GM18951 (cell line): ENCODE measurements at regions of chr4 and their contacts with region 1.

Region 1: GRCh38 chr4:16026160-16026761 is 57.6 kb downstream of the PROM1 start:
- POLR2A ChIP-seq: no peak

Region 2: GRCh38 chr4:15963001-15963451 is 63.2 kb before region 1 on chr4 and contains the start of gene FGFBP2:
- in situ Hi-C with region 1: no loop called
- POLR2A ChIP-seq: no peak

Region 3: DNA sequence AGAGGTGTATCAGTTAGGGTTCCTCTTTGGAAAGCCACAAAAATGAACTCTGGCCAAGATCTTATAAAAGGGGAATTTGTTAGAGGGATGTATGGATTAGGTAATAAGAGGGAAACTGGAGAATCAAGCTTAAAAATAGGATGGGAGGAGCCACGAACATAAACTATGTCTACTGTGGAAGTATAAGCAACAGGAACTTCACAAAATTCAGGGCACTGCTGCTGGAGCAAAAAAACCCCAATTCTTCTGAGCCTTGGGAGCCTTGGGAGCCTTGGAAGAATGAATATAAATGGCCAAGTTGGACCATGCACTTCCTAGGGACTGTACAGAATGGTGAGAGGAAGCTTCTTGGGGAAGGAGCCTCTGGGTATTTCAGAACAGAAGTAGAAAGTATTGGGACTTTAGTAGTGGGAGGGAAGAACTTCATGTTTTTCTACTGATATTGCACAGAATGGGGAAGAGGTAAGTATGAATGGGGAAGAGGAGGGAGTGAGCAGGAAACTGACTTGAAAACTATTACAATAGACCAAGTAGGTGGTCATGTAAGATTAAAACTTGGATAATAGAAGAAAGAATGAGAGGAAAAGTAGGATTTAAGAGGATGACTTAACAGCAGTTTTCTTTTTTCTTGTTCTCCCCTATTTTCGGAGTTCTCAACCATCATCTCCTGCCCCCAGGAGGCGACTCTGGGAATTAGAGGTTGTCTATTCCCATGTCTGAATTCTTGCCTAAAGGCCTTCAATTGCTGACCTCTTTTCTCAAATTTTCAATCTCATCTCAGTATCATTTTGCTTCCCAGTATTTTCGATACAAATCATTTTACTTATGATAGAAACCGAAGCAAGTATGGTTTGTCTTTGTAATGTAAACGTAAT is 244.4 kb after region 1 on chr4:
- in situ Hi-C with region 1: loop called (anchors 5 kb)
- POLR2A ChIP-seq: no peak